Ascending aorta (tissue), 2 donors: ENCODE measurements at regions of chr11 and their contacts with region 1.

Region 1: DNA sequence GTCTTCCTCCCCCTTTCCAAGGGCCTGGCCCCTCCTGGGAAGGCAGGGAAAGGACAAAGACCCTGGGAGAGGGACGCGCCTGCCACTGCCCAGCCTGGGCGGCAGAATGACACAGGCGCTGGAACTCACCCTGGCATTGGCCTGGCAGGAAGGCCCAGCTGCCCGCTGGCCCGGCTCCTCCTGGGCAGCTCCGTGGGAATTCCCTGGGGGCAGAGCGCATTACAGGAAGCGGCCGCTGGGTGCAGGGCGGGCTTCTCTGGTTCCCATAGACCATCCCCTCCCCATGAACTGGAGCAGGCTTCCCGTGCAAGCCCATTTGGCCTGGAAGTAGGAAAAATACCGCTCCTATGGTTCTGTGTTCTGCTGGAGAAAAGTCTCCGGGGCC is 58.6 kb downstream of the LINC01488 start:
- DNase-seq: peak; percentile 34 to 90
- H3K4me3 ChIP-seq: peak overlapping the region in 1 of 2 donors; percentile 40
- H3K27ac ChIP-seq: peak overlapping the region; percentile 74 to 89
- H3K4me1 ChIP-seq: peaks cover 13 to 35% of the 10 kb centered on the region in 2 donors
- H3K27me3 ChIP-seq: no peaks in the 10 kb centered on the region
- CTCF ChIP-seq: peak; percentile 34 to 39 (median 38)

Region 2: GRCh38 chr11:69131644-69132300 is 408.3 kb before region 1 on chr11:
- intact Hi-C with region 1: loop called (anchors 5 kb)
- DNase-seq: peak; percentile 26 to 84
- H3K4me3 ChIP-seq: no peak overlapping the region
- H3K27ac ChIP-seq: peak overlapping the region; percentile 72 to 73
- H3K4me1 ChIP-seq: peaks cover 0 to 21% of the 10 kb centered on the region in 2 donors
- H3K27me3 ChIP-seq: no peaks in the 10 kb centered on the region
- CTCF ChIP-seq: peak; percentile 85 to 89 (median 86)

Region 3: GRCh38 chr11:69296890-69297786 is 243.0 kb before region 1 on chr11:
- intact Hi-C with region 1: loop called (anchors 1 kb)
- DNase-seq: peak; percentile 85 to 98
- H3K4me3 ChIP-seq: peak overlapping the region in 1 of 2 donors; percentile 39
- H3K27ac ChIP-seq: peak overlapping the region; percentile 85 to 93
- H3K4me1 ChIP-seq: peaks cover 25 to 36% of the 10 kb centered on the region in 2 donors
- H3K27me3 ChIP-seq: no peaks in the 10 kb centered on the region
- CTCF ChIP-seq: no peak

Region 4: DNA sequence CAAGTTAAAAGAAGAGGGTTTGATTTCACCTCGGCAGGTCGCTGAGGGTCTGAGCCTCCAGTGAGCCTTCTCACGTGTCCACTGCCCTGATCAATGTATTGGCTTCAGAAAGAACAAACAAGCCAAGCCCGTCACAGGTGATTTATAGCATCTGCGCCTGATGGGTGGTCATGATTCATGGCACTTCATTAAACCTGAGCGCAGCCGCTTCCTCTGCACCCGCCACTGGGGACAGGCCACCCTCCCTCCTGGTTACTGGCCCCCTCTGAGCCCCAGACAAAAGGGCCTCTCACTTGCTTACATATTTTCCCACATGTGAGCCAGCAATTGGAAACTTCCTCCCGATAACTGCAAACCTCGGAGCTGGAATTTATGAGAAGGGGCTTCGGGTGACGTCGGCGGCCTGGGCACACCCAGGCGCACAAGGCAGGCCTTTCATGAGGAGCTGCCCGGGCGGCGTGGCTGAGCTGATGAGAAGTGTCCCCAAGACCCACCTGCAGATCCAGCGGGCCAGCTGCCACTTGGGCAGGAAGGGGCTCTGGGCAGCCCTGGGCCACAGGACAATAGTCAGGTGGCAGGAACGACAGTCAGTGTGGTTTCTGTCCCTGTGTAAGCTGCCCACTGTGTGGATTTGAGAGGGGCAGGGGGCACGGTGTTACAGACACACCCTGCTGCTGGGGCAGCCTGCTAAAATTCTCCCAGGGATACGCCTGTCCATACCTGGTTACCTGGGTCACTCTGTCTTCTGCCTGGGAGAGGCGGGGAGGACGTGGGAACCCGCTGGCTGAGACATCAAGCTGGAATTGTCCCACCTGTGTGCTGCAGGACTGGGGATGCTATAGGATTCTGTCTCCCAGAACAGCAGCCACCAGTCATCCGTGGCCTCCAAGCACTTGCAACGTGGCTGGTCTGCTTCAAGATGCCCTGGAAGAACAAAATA is 122.7 kb before region 1 on chr11:
- intact Hi-C with region 1: loop called (anchors 1 kb)
- DNase-seq: no peak
- H3K4me3 ChIP-seq: no peak overlapping the region
- H3K27ac ChIP-seq: peak overlapping the region; percentile 63 to 66
- H3K4me1 ChIP-seq: peaks cover 6 to 32% of the 10 kb centered on the region in 2 donors
- H3K27me3 ChIP-seq: no peaks in the 10 kb centered on the region
- CTCF ChIP-seq: no peak

Region 5: GRCh38 chr11:69636312-69637197 is 96.4 kb after region 1 on chr11:
- intact Hi-C with region 1: loop called (anchors 2 kb)
- DNase-seq: peak in 1 of 2 donors; percentile 83
- H3K4me3 ChIP-seq: peak overlapping the region; percentile 51 to 88
- H3K27ac ChIP-seq: peak overlapping the region; percentile 18 to 69
- H3K4me1 ChIP-seq: peaks cover 9 to 37% of the 10 kb centered on the region in 2 donors
- H3K27me3 ChIP-seq: no peaks in the 10 kb centered on the region
- CTCF ChIP-seq: no peak

Region 6: GRCh38 chr11:69775163-69775755 is 235.1 kb after region 1 on chr11 and contains the start of gene FGF4:
- intact Hi-C with region 1: no loop called
- DNase-seq: no peak
- H3K4me3 ChIP-seq: no peak within 1 kb of the TSS
- H3K27ac ChIP-seq: no peak within 1 kb of the TSS
- H3K4me1 ChIP-seq: no peaks in the 10 kb centered on the region
- H3K27me3 ChIP-seq: peaks cover 5% of the 10 kb centered on the region
- CTCF ChIP-seq: no peak
- total RNA-seq, gene FGF4: not detected